Common myeloid progenitor, CD34-positive (primary cell): ENCODE measurements at regions of chr1 and their contacts with region 1.

Region 1: DNA sequence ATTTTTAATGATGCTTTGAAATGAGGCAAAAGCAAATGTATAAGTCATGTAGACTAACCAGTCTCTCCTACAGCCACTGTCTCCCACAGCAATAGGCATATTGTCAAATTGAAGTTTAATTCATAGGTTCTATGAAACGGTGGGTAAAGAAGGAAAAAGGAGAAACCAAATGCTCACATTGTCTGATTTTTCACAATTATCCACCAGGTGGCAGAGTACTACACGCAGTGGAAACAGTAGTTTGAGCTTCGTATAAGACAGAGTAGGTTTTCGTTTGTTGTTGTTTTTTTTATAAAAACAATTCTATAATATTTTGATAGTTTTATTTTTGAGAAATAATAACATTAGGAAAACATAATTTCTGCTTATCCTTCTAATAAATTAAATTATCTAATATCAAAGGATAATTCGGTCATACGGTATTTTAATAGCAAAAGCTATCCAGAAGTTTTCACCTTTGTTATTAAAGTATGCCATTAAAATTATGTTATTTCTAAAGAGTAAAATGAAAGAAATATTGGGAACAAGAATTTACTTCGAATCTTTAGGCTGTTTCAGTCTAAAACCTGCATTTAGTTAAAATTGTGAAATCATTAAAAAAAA is 39.1 kb downstream of the TYW3 start:
- DNase-seq: peak; percentile 46 to 71 (median 61)
- H3K4me3 ChIP-seq: no peak overlapping the region
- H3K27ac ChIP-seq: no peak overlapping the region
- H3K4me1 ChIP-seq: no peaks in the 10 kb centered on the region
- H3K27me3 ChIP-seq: peaks cover 0 to 11% (median 3%) of the 10 kb centered on the region in 5 experiments

Region 2: DNA sequence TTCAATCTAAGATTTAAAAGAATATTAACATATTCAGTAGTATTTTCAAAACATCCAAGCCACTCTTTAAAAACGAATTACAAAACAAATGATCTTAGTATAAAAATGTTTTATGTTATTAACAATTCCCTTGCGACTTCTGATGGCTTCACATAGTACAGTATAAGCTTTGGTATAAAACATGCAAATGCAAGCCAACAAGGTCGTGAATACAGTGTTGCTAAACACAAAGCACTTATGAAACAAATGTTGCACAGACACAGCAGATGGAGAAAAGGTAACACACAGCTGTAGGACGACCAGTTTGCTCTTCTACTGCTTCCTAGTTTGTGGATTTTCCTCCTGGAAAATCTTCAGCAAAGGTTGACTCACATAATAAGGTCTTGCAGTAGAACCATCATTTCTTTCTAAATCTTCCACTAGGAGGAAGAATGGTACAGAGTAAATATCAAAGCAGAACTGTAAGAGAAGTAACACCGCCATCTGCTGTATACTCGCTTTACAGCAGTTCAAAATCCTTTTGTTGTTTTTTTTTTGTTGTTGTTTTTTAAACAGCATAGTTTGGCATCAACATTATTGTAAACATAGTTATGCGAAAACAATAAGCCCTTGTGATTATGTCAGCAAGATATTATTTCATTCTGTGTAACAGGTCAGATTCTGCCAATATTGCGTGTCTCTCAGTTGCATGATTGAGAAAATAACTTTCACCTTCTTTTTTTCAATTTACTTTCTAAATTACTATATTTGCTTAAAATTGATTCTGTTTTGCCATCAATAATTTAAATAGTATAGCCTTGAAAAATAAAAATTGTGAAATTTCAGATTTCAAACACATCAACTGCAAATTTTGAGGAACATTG is 431.6 kb after region 1 on chr1:
- CTCF ChIA-PET with region 1: interaction called, 29 read pairs
- POLR2A ChIA-PET with region 1: no interaction called
- DNase-seq: peak; percentile 55 to 64 (median 62)
- H3K4me3 ChIP-seq: no peak overlapping the region
- H3K27ac ChIP-seq: no peak overlapping the region
- H3K4me1 ChIP-seq: no peaks in the 10 kb centered on the region
- H3K27me3 ChIP-seq: peaks cover 0 to 7% (median 0%) of the 10 kb centered on the region in 5 experiments